Activated CD4-positive, alpha-beta memory T cell treated with anti-CD3 and anti-CD28 coated beads for 36 hours (primary cell): ENCODE measurements at regions of chr7 and their contacts with region 1.

Region 1: DNA sequence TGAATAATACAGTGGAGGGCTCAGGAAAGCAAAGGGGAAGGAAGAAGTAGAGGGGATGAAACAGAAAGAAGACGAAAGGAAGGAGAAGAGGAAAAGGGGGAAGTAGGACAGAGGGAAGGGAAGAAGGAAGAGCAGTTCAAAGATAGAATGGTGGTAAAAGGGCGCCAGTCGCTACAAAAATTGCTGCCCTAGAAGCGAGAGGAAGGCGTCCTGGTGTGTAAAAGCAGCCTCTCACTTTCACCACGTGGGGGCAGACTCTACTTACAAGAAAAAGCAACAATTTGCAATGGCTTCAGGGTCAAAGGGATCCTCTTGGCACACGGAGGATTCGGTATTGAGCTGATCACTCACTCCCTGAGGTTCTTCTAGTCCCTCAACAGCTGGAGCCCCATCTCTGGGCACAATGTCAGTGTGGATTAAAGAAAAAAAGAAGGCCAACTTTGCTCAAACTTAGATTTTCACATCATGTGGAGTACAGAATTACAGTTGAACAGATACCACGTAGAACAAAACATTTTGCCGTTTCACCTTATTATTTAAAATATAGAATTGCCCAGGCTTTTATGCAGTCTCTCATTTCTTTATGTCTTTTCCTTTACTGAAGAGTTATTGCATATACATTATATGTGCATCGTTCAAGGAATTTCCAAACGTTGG is 31.4 kb upstream of the NPVF start:
- DNase-seq: peak; percentile 75
- H3K4me3 Mint-ChIP-seq: no peak overlapping the region
- H3K27ac Mint-ChIP-seq: no peak overlapping the region
- H3K4me1 Mint-ChIP-seq: peaks cover 21% of the 10 kb centered on the region
- H3K27me3 Mint-ChIP-seq: peaks cover 6% of the 10 kb centered on the region

Region 2: DNA sequence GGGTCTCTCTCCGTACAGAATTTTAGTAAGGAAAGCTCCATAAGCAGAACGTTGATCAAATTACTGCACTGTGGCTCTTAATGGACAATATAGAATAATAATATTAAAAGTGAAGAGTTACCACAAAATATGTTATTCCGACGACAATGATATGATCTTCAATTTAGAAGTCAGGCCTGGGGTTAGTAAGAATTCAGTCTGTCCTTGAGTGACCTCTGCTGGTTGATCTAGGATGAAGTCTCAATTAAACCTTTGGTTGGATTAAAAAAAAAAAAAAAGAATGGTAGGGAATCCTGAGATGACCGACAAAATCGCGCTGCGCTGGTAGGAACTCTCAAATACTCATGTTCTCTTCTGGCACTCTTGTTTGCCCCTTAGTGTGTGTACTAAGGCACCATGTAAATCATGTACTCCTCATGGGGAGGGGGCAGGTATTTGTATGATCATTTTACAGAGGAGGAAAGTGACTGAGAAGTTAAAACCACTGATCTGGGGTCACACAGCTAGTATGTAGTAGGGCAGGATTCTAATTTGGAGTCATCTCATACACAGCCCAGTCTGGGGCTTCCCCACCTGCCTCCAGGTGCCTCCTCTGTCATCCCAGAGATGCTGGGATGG is 129.9 kb after region 1 on chr7:
- CTCF ChIA-PET with region 1: interaction called, 36 read pairs
- POLR2A ChIA-PET with region 1: no interaction called
- intact Hi-C with region 1: loop called (anchors 1 kb)
- DNase-seq: no peak
- H3K4me3 Mint-ChIP-seq: no peak overlapping the region
- H3K27ac Mint-ChIP-seq: no peak overlapping the region
- H3K4me1 Mint-ChIP-seq: no peaks in the 10 kb centered on the region
- H3K27me3 Mint-ChIP-seq: peaks cover 9% of the 10 kb centered on the region

Region 3: DNA sequence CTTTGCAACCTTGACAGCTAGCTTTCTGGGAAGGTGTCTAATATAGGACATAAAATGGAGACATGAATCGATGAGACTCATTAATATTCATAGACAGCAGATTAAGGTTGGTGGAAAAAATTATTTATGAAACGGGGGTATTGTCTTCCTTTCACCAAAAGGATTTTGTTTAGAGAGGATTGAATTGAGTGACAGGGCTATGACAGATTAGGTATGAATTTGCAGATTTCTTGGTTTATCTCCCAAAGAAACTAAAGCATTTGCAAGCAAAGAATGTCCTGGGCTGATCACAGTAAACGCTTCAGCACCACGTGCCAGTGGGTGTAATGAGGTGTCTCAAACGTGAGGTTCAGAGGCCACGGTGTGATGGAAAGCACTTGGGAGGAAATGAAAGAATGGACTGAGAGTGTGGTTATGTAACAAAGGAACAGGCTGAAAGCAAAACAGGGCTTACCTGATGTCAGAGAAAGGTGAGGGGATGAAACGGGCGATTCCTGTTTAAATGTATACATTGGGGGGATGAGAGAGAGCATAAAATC is 297.7 kb after region 1 on chr7:
- CTCF ChIA-PET with region 1: interaction called, 23 read pairs
- POLR2A ChIA-PET with region 1: no interaction called
- intact Hi-C with region 1: no loop called
- DNase-seq: peak; percentile 13
- H3K4me3 Mint-ChIP-seq: no peak overlapping the region
- H3K27ac Mint-ChIP-seq: no peak overlapping the region
- H3K4me1 Mint-ChIP-seq: peaks cover 5% of the 10 kb centered on the region
- H3K27me3 Mint-ChIP-seq: peaks cover 3% of the 10 kb centered on the region

Region 4: DNA sequence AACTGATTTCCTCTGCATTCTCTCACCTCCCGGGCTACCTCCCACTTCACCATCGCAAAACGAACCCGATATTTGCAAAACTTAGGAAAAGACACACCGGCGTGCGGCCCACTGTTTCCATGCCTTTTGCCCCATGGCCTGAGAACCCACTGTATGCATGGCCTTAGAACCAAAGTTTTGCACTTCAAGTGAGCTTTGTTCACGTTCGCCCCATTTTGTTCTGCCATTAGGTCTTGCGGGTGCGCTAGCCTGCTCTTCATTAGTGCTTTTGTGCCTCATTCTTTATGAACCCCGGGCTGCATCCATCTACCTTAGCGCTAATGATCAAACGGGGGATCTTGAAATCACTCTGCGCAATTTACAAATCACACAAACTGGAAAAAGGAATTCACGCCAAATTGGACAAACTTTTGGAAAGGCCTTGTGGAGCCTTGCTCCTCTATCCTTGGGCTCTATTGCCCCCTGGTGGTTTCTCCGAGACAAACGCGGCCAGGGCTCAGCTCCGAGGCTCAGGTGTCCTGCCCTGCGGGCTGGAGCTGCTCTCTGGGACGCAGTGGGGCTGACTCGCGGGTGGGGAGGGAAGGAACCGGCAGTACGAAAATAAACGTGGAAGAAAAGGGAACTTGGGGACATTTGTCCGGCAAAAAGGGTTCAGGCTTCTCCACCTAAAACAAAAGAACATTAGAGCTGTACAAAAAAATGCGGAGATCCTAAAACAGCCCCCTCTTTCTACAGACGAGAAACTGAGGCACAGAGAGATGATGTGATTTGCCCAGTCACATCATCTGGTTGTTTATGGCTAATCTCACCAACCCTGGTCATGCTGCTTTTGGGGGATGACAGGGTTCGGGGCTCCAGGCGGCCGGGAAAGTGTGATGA is 591.9 kb after region 1 on chr7:
- CTCF ChIA-PET with region 1: interaction called, 6 read pairs
- POLR2A ChIA-PET with region 1: no interaction called
- intact Hi-C with region 1: loop called (anchors 1 kb)
- DNase-seq: peak; percentile 78
- H3K4me3 Mint-ChIP-seq: peak overlapping the region; percentile 65
- H3K27ac Mint-ChIP-seq: no peak overlapping the region
- H3K4me1 Mint-ChIP-seq: peaks cover 11% of the 10 kb centered on the region
- H3K27me3 Mint-ChIP-seq: peaks cover 51% of the 10 kb centered on the region